Pancreas (tissue), 10 donors: ENCODE measurements at regions of chr19 and their contacts with region 1.

Region 1: DNA sequence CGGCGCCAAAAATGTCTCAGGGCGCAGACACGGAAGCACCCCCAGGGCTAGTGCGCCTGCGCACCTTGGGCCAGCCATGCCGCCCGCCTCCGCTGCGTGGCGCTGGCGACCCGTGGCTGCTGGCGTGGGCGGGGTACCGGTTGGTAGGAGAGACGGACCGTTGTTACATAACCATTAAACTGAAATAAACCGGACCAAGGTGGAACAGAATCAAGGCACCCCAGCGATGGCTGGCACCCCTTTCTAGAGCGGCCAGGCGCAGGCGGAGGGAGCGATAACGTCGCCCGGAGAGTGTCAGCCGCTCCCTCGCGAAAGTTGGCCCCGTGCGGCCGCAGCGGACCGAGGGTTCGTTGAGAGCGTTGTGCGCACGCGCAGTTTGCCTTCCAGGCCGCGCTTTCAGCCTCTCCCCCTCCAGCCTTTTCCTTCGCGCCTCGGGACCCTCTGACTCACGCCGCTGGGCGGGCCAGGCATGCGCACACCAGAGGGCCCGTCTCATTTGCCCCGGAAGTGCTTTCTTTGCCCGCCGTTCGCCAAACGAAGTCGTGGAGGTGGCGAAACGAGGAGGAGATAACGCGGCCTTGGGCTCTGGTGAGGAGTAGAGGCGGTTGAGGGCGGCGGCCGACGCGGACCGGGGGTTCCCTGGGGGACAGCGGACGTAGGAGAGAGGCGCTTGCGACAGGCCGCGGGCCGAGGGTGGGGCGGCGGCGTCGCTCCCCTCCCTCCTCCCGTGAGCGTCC is at the starts of genes PLEKHJ1 and SF3A2:
- DNase-seq: peak; percentile 95 to 100 (median 98)
- ATAC-seq: peak; percentile 86 to 94 (median 87)
- H3K4me3 ChIP-seq: peak within 1 kb of the TSS; percentile 82 to 96 (median 94)
- H3K27ac ChIP-seq: peak within 1 kb of the TSS; percentile 96 to 100 (median 98)
- H3K4me1 ChIP-seq: peaks cover 12 to 44% (median 36%) of the 10 kb centered on the region in 3 donors
- H3K27me3 ChIP-seq: no peaks in the 10 kb centered on the region
- CTCF ChIP-seq: peak; percentile 95 to 99 (median 98)
- total RNA-seq, gene PLEKHJ1: 34.3 to 50.8 (median 39.6) TPM
- total RNA-seq, gene SF3A2: 25.0 to 36.1 (median 29.6) TPM

Region 2: GRCh38 chr19:2151339-2152229 is 84.9 kb before region 1 on chr19 and contains the start of gene AP3D1:
- intact Hi-C with region 1: loop called in 1 of 3 experiments (anchors 10 kb)
- DNase-seq: peak; percentile 100
- ATAC-seq: peak; percentile 92 to 96 (median 94)
- H3K4me3 ChIP-seq: peak within 1 kb of the TSS; percentile 86 to 99 (median 96)
- H3K27ac ChIP-seq: peak within 1 kb of the TSS; percentile 53 to 76 (median 68)
- H3K4me1 ChIP-seq: peaks cover 0 to 20% (median 2%) of the 10 kb centered on the region in 3 donors
- H3K27me3 ChIP-seq: no peaks in the 10 kb centered on the region
- CTCF ChIP-seq: no peak
- total RNA-seq, gene AP3D1: 75.2 to 105 (median 83.9) TPM